Mammary epithelial cell (primary cell): ENCODE measurements at regions of chr4 and their contacts with region 1.

Region 1: DNA sequence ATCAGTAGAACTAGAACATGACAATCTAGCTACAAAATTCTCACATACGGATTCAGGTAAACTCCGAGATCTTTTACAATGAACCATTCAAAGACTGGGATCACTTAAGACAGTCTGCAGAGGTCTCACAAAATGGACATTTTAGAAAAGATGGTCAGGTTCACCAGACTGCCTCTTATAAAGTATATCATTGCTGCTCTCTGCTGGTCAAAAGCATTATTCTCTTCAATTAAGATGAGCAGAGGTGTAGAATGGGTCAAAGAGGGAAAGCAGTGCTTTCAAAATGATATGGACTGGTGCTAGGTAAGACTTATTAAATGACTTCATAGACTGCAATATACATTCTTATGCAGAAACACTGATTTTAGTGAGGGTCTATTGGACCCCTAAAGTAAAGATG is 434.7 kb downstream of the PACRGL start:
- DNase-seq: peak; percentile 29
- H3K4me3 ChIP-seq: no peak overlapping the region
- H3K27ac ChIP-seq: no peak overlapping the region
- H3K4me1 ChIP-seq: no peaks in the 10 kb centered on the region
- H3K27me3 ChIP-seq: peaks cover 2% of the 10 kb centered on the region
- CTCF ChIP-seq: peak; percentile 43 to 56

Region 2: DNA sequence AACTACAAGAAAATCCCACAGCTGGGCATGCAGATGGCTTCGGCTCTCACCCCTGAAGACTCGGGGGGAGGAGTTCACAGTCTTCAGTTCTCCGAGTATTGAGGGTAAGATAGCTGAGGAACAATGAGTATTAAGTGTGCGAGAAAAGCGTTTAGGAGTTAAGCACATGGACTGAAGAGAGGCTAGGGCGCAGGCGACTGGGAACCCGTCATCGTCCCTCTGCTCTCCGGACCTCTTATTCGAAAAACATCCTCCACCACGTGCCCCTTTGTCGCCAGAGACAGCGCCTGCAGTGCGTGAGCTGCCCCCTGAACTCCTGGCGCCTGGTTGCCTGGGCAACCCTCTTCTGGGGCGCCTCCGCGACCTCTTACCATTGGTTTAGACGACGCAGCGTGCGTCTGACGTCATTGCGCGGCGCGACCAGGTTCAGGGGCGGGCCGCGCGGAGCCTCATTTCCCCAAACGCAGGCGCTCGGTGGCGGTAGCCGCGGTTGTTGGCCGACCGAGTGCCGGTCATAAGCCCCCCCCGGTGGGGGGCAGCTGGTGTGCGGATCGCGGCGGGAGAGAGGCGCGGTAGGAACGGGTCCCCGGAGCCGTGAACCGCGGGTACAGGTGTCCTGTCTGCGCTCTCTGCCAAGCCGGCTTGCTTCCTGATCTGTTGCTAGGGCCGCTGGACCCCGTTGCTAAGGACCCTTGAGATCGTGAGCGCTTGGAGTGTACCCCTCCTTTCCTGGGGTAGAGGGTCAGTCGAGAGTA is 434.8 kb before region 1 on chr4 and contains the start of gene PACRGL:
- CTCF ChIA-PET with region 1: no interaction called
- dilution Hi-C with region 1: no loop called
- in situ Hi-C with region 1: no loop called
- intact Hi-C with region 1: loop called (anchors 10 kb)
- DNase-seq: peak; percentile 88
- H3K4me3 ChIP-seq: peak within 1 kb of the TSS; percentile 75 to 98 (median 92)
- H3K27ac ChIP-seq: peak within 1 kb of the TSS; percentile 79
- H3K4me1 ChIP-seq: peaks cover 11% of the 10 kb centered on the region
- H3K27me3 ChIP-seq: no peaks in the 10 kb centered on the region
- CTCF ChIP-seq: no peak
- total RNA-seq, gene PACRGL: 16.0 to 29.2 TPM

Region 3: GRCh38 chr4:20773144-20773997 is 361.6 kb before region 1 on chr4:
- CTCF ChIA-PET with region 1: interaction called, 6 read pairs
- dilution Hi-C with region 1: loop called (anchors 25 kb)
- in situ Hi-C with region 1: loop called (anchors 5 to 10 kb)
- intact Hi-C with region 1: loop called (anchors 1 kb)
- DNase-seq: peak; percentile 53
- H3K4me3 ChIP-seq: no peak overlapping the region
- H3K27ac ChIP-seq: no peak overlapping the region
- H3K4me1 ChIP-seq: no peaks in the 10 kb centered on the region
- H3K27me3 ChIP-seq: no peaks in the 10 kb centered on the region
- CTCF ChIP-seq: peak; percentile 69 to 76

Region 4: GRCh38 chr4:20901851-20902250 is 233.1 kb before region 1 on chr4:
- CTCF ChIA-PET with region 1: no interaction called
- dilution Hi-C with region 1: no loop called
- in situ Hi-C with region 1: no loop called
- intact Hi-C with region 1: no loop called
- DNase-seq: no peak
- H3K4me3 ChIP-seq: no peak overlapping the region
- H3K27ac ChIP-seq: no peak overlapping the region
- H3K4me1 ChIP-seq: no peaks in the 10 kb centered on the region
- H3K27me3 ChIP-seq: no peaks in the 10 kb centered on the region
- CTCF ChIP-seq: no peak

Region 5: GRCh38 chr4:21032089-21032645 is 102.8 kb before region 1 on chr4:
- CTCF ChIA-PET with region 1: no interaction called
- dilution Hi-C with region 1: no loop called
- in situ Hi-C with region 1: no loop called
- intact Hi-C with region 1: no loop called
- DNase-seq: no peak
- H3K4me3 ChIP-seq: no peak overlapping the region
- H3K27ac ChIP-seq: no peak overlapping the region
- H3K4me1 ChIP-seq: no peaks in the 10 kb centered on the region
- H3K27me3 ChIP-seq: no peaks in the 10 kb centered on the region
- CTCF ChIP-seq: no peak